H1 (cell line): ENCODE measurements at regions of chr4 and their contacts with region 1.

Region 1: GRCh38 chr4:41644288-41644914 is 104.1 kb downstream of the PHOX2B start:
- DNase-seq: peak; percentile 67 to 99
- H3K4me3 ChIP-seq: peak overlapping the region in 1 of 4 experiments; percentile 49; a peak in 4 of 8 replicates
- H3K27ac ChIP-seq: no peak overlapping the region
- H3K4me1 ChIP-seq: peaks cover under 1 to 8% (median 4%) of the 10 kb centered on the region in 4 experiments; a peak in 5 of 7 replicates
- H3K27me3 ChIP-seq: peaks cover 0 to 8% (median 4%) of the 10 kb centered on the region in 4 experiments; a peak in 3 of 7 replicates
- CTCF ChIP-seq: peak; percentile 91 to 98 (median 94)
- EP300 ChIP-seq: peak in 1 of 2 experiments; percentile 76; a peak in 1 of 3 replicates
- POLR2A ChIP-seq: no peak
- RAD21 ChIP-seq: peak; percentile 95 to 96

Region 2: GRCh38 chr4:41360214-41360920 is 284.0 kb before region 1 on chr4:
- CTCF ChIA-PET with region 1: interaction called, 15 read pairs
- POLR2A ChIA-PET with region 1: no interaction called
- DNase-seq: peak in 1 of 2 experiments; percentile 68
- H3K4me3 ChIP-seq: peak overlapping the region; percentile 60 to 75 (median 63)
- H3K27ac ChIP-seq: no peak overlapping the region
- H3K4me1 ChIP-seq: peaks cover 15 to 32% (median 22%) of the 10 kb centered on the region in 4 experiments
- H3K27me3 ChIP-seq: peaks cover 36 to 70% (median 64%) of the 10 kb centered on the region in 4 experiments
- CTCF ChIP-seq: no peak
- EP300 ChIP-seq: no peak
- POLR2A ChIP-seq: no peak
- RAD21 ChIP-seq: no peak

Region 3: GRCh38 chr4:41611881-41612871 is 32.2 kb before region 1 on chr4:
- CTCF ChIA-PET with region 1: interaction called, 17 read pairs
- POLR2A ChIA-PET with region 1: no interaction called
- DNase-seq: no peak
- H3K4me3 ChIP-seq: peak overlapping the region in 1 of 4 experiments; percentile 46; a peak in 2 of 8 replicates
- H3K27ac ChIP-seq: no peak overlapping the region
- H3K4me1 ChIP-seq: peaks cover 2 to 14% (median 8%) of the 10 kb centered on the region in 4 experiments; a peak in 3 of 7 replicates
- H3K27me3 ChIP-seq: peaks cover 0 to 8% (median 3%) of the 10 kb centered on the region in 4 experiments; a peak in 4 of 7 replicates
- CTCF ChIP-seq: no peak
- EP300 ChIP-seq: no peak
- POLR2A ChIP-seq: no peak
- RAD21 ChIP-seq: no peak

Region 4: GRCh38 chr4:41632481-41633073 is 11.8 kb before region 1 on chr4:
- CTCF ChIA-PET with region 1: interaction called, 26 read pairs
- POLR2A ChIA-PET with region 1: no interaction called
- DNase-seq: no peak
- H3K4me3 ChIP-seq: no peak overlapping the region
- H3K27ac ChIP-seq: no peak overlapping the region
- H3K4me1 ChIP-seq: no peaks in the 10 kb centered on the region
- H3K27me3 ChIP-seq: peaks cover 0 to 2% (median 0%) of the 10 kb centered on the region in 4 experiments; a peak in 2 of 7 replicates
- CTCF ChIP-seq: no peak
- EP300 ChIP-seq: no peak
- POLR2A ChIP-seq: no peak
- RAD21 ChIP-seq: no peak

Region 5: DNA sequence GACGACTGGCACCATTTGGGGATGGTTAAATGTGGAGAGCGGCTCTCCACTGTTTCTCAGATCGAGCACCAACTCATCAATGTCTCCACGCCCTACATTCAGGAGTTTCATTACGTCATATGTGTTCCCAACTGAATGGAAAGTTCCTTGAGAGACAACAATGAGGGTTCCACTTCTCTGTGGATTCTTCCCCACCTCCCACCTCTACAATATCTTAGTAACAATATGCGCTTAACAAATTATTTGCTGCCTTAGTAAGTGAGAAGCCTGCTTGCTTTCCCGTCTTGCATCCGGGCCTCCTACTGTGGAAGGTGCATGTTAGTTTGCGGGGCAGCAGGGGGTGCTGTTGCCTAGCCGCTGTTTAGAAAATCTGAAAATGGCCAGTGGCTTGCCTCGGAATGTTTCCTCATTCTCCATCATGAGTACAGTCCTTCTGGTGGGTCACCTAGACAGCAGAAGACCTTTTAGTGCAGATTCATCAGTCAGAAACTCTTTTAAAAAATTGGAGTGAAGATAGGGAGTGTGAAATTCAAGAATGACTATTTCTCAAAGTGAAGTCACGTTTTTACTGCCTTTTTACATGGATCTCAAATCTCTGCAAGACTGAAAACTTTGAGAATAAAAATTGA is 48.4 kb after region 1 on chr4:
- CTCF ChIA-PET with region 1: no interaction called
- POLR2A ChIA-PET with region 1: no interaction called
- DNase-seq: peak; percentile 25 to 72
- H3K4me3 ChIP-seq: peak overlapping the region in 1 of 4 experiments; percentile 19; a peak in 1 of 8 replicates
- H3K27ac ChIP-seq: no peak overlapping the region
- H3K4me1 ChIP-seq: no peaks in the 10 kb centered on the region
- H3K27me3 ChIP-seq: no peaks in the 10 kb centered on the region
- CTCF ChIP-seq: peak; percentile 86 to 92 (median 88)
- EP300 ChIP-seq: no peak
- POLR2A ChIP-seq: no peak
- RAD21 ChIP-seq: peak; percentile 96 to 97